Naive thymus-derived CD4-positive, alpha-beta T cell (primary cell): ENCODE measurements at regions of chr15 and their contacts with region 1.

Region 1: DNA sequence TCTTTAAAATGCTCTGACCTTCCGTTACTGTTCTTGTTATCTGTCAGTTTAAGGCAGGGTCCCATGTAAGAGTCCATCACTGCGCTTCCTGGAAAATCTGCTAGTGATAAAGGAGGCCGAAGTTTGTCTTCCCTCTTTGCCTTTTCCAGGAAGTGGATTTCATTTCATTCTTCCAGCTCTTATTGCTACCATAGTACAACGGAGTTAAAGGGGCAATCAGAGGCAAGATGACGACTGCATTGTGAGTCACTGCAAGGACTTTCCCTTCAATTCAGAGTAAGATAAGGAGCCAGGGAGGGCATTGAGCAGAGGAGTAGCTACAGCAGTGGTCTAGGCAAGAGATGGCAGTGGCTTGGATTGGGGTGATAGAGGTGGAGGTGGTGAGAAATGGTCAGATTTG is 17.2 kb upstream of the DET1 start:
- DNase-seq: no peak
- ATAC-seq: no peak
- H3K4me3 ChIP-seq: no peak overlapping the region
- H3K4me3 Mint-ChIP-seq: no peak overlapping the region
- H3K27ac ChIP-seq: no peak overlapping the region
- H3K27ac Mint-ChIP-seq: no peak overlapping the region
- H3K4me1 ChIP-seq: no peaks in the 10 kb centered on the region
- H3K4me1 Mint-ChIP-seq: peaks cover 0 to 2% (median 0%) of the 10 kb centered on the region in 7 donors
- H3K27me3 ChIP-seq: no peaks in the 10 kb centered on the region
- H3K27me3 Mint-ChIP-seq: peaks cover 3 to 28% (median 18%) of the 10 kb centered on the region in 5 donors

Region 2: DNA sequence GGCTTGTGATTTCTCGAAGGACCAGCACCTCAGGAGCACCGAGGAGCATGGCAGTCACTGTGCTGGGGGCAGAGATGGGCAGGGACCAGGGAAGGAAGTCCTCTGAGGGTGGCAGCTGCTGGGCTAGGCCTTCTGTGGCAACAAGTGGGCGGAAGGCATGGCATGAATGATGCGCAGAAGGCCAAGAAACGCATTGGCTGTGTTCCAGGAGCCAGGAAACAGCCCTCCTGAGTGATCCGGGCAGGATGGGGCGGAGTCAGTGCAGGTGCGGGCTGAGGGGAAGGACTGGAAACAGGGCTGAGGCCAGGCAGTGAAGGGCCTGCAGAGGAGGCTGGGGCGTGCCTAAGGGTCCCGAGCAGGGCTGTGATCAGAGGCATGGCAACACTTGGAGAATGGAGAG is 72.5 kb before region 1 on chr15:
- CTCF ChIA-PET with region 1: no interaction called
- POLR2A ChIA-PET with region 1: no interaction called
- intact Hi-C with region 1: no loop called
- DNase-seq: no peak
- ATAC-seq: no peak
- H3K4me3 ChIP-seq: no peak overlapping the region
- H3K4me3 Mint-ChIP-seq: no peak overlapping the region
- H3K27ac ChIP-seq: no peak overlapping the region
- H3K27ac Mint-ChIP-seq: no peak overlapping the region
- H3K4me1 ChIP-seq: no peaks in the 10 kb centered on the region
- H3K4me1 Mint-ChIP-seq: peaks cover 0 to 6% (median 0%) of the 10 kb centered on the region in 7 donors
- H3K27me3 ChIP-seq: no peaks in the 10 kb centered on the region
- H3K27me3 Mint-ChIP-seq: no peaks in the 10 kb centered on the region

Region 3: DNA sequence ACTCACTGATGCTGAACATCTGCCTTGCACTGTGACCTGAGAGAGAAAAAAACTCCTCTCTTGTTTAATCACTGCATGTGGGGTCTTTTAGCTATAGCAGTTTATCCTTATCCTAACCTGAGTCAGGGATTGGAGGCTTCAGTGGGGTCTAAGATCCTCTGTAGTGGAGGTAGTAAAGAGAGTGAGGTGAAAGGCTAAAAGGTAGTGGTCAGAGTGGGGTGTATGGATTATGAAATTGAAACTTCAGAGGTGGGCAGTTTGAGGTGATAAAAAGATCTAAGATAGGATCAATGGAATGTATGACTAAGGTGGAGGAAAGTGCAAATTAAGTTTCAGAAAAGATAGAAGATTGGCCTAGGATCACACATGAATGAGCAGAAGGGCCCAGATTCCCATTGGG is 53.7 kb before region 1 on chr15:
- CTCF ChIA-PET with region 1: no interaction called
- POLR2A ChIA-PET with region 1: no interaction called
- intact Hi-C with region 1: loop called in 1 of 2 experiments (anchors 10 kb)
- DNase-seq: no peak
- ATAC-seq: no peak
- H3K4me3 ChIP-seq: no peak overlapping the region
- H3K4me3 Mint-ChIP-seq: no peak overlapping the region
- H3K27ac ChIP-seq: no peak overlapping the region
- H3K27ac Mint-ChIP-seq: peak overlapping the region in 1 of 9 donors; percentile 77
- H3K4me1 ChIP-seq: no peaks in the 10 kb centered on the region
- H3K4me1 Mint-ChIP-seq: no peaks in the 10 kb centered on the region
- H3K27me3 ChIP-seq: no peaks in the 10 kb centered on the region
- H3K27me3 Mint-ChIP-seq: no peaks in the 10 kb centered on the region

Region 4: DNA sequence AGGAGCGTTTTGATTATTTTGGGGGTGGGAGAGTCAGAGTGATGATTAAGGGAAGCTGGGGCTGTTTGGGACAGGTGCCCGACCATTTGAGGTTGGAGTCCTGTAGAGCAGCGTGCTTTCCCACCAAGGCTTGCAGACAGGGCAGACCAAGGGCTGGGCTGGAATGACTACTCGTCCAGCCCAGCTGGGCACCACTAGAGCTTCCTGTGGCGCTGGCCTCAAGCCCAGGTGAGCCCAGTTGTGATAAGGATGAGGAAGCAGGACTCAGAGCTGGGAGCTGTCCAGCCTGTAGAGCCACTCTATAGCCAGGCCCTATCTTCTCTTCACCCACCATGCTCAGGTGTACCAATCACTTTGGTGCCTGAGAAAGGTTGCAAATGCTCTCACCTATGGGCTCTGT is 163.8 kb after region 1 on chr15:
- CTCF ChIA-PET with region 1: no interaction called
- POLR2A ChIA-PET with region 1: no interaction called
- intact Hi-C with region 1: no loop called
- DNase-seq: no peak
- ATAC-seq: no peak
- H3K4me3 ChIP-seq: no peak overlapping the region
- H3K4me3 Mint-ChIP-seq: no peak overlapping the region
- H3K27ac ChIP-seq: no peak overlapping the region
- H3K27ac Mint-ChIP-seq: no peak overlapping the region
- H3K4me1 ChIP-seq: no peaks in the 10 kb centered on the region
- H3K4me1 Mint-ChIP-seq: peaks cover 0 to 5% (median 0%) of the 10 kb centered on the region in 7 donors
- H3K27me3 ChIP-seq: no peaks in the 10 kb centered on the region
- H3K27me3 Mint-ChIP-seq: peaks cover 0 to 22% (median 1%) of the 10 kb centered on the region in 5 donors